HepG2 (cell line): ENCODE measurements at regions of chr1 and their contacts with region 1.

Region 1: GRCh38 chr1:197924516-197925123 is 7.4 kb downstream of the LHX9 start:
- DNase-seq: peak; percentile 53
- ATAC-seq: peak; percentile 81
- H3K4me3 ChIP-seq: no peak overlapping the region
- H3K27ac ChIP-seq: no peak overlapping the region
- H3K4me1 ChIP-seq: no peaks in the 10 kb centered on the region
- H3K27me3 ChIP-seq: peaks cover 0 to 5% of the 10 kb centered on the region in 2 experiments; a peak in 4 of 5 replicates
- CTCF ChIP-seq: peak; percentile 77
- EP300 ChIP-seq: no peak
- POLR2A ChIP-seq: no peak
- RAD21 ChIP-seq: peak; percentile 51; the same call in 1 of the 2 replicates

Region 2: DNA sequence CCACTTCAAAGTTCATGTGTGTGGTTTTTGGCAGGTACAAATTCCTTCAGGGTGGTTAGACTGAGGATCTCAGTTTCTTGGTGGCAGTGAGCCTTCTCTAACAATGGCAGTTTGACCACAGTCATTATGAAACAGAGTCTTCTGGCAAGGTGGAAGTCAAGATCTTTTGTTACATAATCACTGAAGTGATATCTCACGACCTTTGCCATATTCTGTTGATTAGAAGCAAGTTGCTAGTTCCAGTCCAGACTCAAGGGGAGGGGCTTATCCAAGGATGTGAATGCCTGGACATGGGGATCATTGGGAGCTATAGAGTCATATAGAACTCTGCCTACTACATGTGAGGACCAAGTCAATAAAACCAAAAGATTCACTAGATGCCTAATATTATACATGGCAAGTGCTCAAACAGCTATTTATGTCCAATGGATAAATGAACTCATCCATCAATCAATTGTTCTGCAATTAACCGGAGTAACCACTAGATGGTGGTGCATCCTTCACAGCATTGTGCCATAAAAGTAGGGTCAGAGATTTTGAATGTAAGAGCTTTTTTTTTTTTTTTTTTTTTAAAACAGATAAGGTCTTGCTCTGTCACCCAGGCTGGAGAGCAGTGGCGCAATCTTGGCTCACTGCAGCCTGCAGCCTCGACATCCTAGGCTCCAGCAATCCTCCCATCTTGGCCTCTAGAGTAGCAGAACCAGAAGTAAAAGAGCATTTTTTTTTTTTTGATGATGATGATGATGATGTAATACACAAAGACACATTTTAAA is 524.7 kb before region 1 on chr1:
- CTCF ChIA-PET with region 1: no interaction called
- POLR2A ChIA-PET with region 1: no interaction called
- in situ Hi-C with region 1: no loop called
- intact Hi-C with region 1: loop called (anchors 2 kb)
- DNase-seq: peak; percentile 59
- ATAC-seq: peak; percentile 81
- H3K4me3 ChIP-seq: no peak overlapping the region
- H3K27ac ChIP-seq: no peak overlapping the region
- H3K4me1 ChIP-seq: no peaks in the 10 kb centered on the region
- H3K27me3 ChIP-seq: no peaks in the 10 kb centered on the region
- CTCF ChIP-seq: peak; percentile 47
- EP300 ChIP-seq: no peak
- POLR2A ChIP-seq: no peak
- RAD21 ChIP-seq: no peak

Region 3: DNA sequence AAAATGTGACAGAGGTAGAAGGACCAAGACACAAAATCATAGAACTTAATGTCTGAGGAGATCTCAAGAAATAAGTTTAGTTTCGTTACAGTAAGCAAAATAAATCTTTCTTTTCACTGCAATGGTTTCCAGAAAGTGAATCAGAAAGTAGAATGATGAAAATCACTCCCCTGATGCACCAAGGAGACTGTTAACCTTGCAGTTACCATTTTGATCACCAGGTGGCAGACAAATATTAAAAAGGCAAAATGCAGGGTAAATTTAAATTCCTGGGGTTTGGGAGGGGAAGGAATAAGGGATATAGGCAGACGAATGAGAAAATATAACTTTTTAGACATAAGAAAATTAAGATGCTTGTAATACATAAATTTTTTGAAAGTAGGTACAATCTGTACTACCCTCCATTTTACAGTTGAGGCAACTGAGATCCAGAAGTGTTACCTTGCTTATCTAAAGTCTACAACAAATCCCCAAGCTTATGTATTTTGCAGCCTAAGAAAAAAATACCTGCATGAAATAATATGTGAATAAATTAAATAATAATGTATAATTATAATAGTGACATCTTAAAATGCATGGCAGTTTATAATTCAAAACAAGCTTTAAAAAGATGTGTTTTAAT is 403.4 kb before region 1 on chr1:
- CTCF ChIA-PET with region 1: interaction called, 11 read pairs
- POLR2A ChIA-PET with region 1: no interaction called
- in situ Hi-C with region 1: loop called (anchors 5 kb)
- intact Hi-C with region 1: loop called (anchors 1 kb)
- DNase-seq: peak; percentile 23
- ATAC-seq: 0 out of 3 replicates have a peak, but pooled peaks have one; percentile 28
- H3K4me3 ChIP-seq: no peak overlapping the region
- H3K27ac ChIP-seq: no peak overlapping the region
- H3K4me1 ChIP-seq: no peaks in the 10 kb centered on the region
- H3K27me3 ChIP-seq: no peaks in the 10 kb centered on the region
- CTCF ChIP-seq: peak; percentile 59
- EP300 ChIP-seq: no peak
- POLR2A ChIP-seq: no peak
- RAD21 ChIP-seq: peak; percentile 39; the same call in 1 of the 2 replicates

Region 4: GRCh38 chr1:197526736-197527371 is 397.8 kb before region 1 on chr1:
- CTCF ChIA-PET with region 1: interaction called, 11 read pairs
- POLR2A ChIA-PET with region 1: no interaction called
- in situ Hi-C with region 1: loop called (anchors 5 kb)
- intact Hi-C with region 1: no loop called
- DNase-seq: peak; percentile 21
- ATAC-seq: no peak
- H3K4me3 ChIP-seq: no peak overlapping the region
- H3K27ac ChIP-seq: no peak overlapping the region
- H3K4me1 ChIP-seq: no peaks in the 10 kb centered on the region
- H3K27me3 ChIP-seq: no peaks in the 10 kb centered on the region
- CTCF ChIP-seq: no peak; the same call in 1 of the 2 replicates
- EP300 ChIP-seq: no peak
- POLR2A ChIP-seq: no peak
- RAD21 ChIP-seq: no peak

Region 5: GRCh38 chr1:197692965-197693364 is 231.7 kb before region 1 on chr1:
- CTCF ChIA-PET with region 1: no interaction called
- POLR2A ChIA-PET with region 1: no interaction called
- in situ Hi-C with region 1: no loop called
- intact Hi-C with region 1: loop called (anchors 2 kb)
- DNase-seq: peak; percentile 15
- ATAC-seq: peak; percentile 61
- H3K4me3 ChIP-seq: no peak overlapping the region
- H3K27ac ChIP-seq: no peak overlapping the region
- H3K4me1 ChIP-seq: peaks cover 16% of the 10 kb centered on the region
- H3K27me3 ChIP-seq: no peaks in the 10 kb centered on the region
- CTCF ChIP-seq: peak; percentile 58
- EP300 ChIP-seq: no peak
- POLR2A ChIP-seq: no peak
- RAD21 ChIP-seq: no peak